ENCODE measurements at regions of chr16 and their contacts with region 1.

Region 1: GRCh38 chr16:20849587-20850390 is 43.5 kb downstream of the REXO5 start:
- DNase-seq: peak; percentile 26 to 66
- ATAC-seq: peak; percentile 65 to 67; a peak in 4 of 6 replicates
- H3K4me3 ChIP-seq: no peak overlapping the region
- H3K27ac ChIP-seq: peak overlapping the region; percentile 35 to 78; a peak in 2 of 6 replicates
- H3K4me1 ChIP-seq: peaks cover 49% of the 10 kb centered on the region
- CTCF ChIP-seq: peak; percentile 95
- EP300 ChIP-seq: no peak
- POLR2A ChIP-seq: no peak
- RAD21 ChIP-seq: peak; percentile 97 to 98

Region 2: DNA sequence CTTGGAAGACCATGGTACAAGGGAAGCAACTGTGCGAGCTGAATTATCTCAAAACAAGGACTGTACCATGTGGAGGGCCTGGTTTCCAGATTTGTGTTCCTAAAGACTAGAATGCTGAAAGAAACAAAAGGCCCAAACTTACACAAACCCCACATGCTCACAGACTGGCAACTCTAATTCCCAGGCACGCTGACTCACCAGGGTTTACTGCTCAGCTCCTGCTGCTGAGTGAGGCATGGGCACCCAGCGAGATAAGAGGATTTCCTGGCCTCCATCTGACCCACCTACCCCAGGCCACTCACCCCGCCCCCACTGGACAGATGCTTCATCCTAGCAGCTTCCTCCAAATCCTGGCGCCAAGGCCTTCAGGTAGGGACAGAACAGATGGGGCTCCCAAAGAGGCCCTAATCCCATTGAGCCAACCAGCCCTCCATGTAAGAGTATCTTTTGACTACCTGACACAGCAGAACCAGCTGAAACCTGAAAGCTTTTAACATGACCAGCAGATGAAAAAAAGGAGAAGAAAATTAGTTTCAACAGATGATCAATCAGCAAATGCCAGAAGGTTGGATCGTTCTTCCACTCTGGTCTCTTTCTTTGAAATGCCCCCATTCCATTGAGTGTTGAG is 16.5 kb after region 1 on chr16:
- CTCF ChIA-PET with region 1: interaction called, 50 read pairs
- POLR2A ChIA-PET with region 1: interaction called, 4 read pairs
- DNase-seq: peak; percentile 76 to 80
- ATAC-seq: peak; percentile 80 to 92
- H3K4me3 ChIP-seq: no peak overlapping the region
- H3K27ac ChIP-seq: peak overlapping the region; percentile 87 to 94
- H3K4me1 ChIP-seq: peaks cover 57% of the 10 kb centered on the region
- CTCF ChIP-seq: no peak
- EP300 ChIP-seq: no peak
- POLR2A ChIP-seq: no peak
- RAD21 ChIP-seq: 0 out of 5 replicates have a peak, but pooled peaks of 1 of the 2 experiments have one; percentile 3

Region 3: GRCh38 chr16:20900299-20901067 is 50.7 kb after region 1 on chr16 and contains the starts of genes DCUN1D3 and LYRM1:
- CTCF ChIA-PET with region 1: interaction called, 60 read pairs
- POLR2A ChIA-PET with region 1: interaction called, 15 read pairs
- DNase-seq: peak; percentile 96 to 99
- ATAC-seq: peak; percentile 92 to 94
- H3K4me3 ChIP-seq: peak within 1 kb of the TSS; percentile 90
- H3K27ac ChIP-seq: peak within 1 kb of the TSS; percentile 92 to 98
- H3K4me1 ChIP-seq: peaks cover 67% of the 10 kb centered on the region
- CTCF ChIP-seq: no peak
- EP300 ChIP-seq: no peak
- POLR2A ChIP-seq: peak; percentile 78
- RAD21 ChIP-seq: no peak
- polyA plus RNA-seq, gene DCUN1D3: 7.2 and 7.5 TPM in 2 replicates
- polyA plus RNA-seq, gene LYRM1: 37.8 and 44.0 TPM in 2 replicates

Region 4: GRCh38 chr16:21001262-21001661 is 151.5 kb after region 1 on chr16:
- CTCF ChIA-PET with region 1: interaction called, 24 read pairs
- POLR2A ChIA-PET with region 1: no interaction called
- DNase-seq: peak; percentile 18 to 47
- ATAC-seq: peak; percentile 47 to 82; a peak in 5 of 6 replicates
- H3K4me3 ChIP-seq: no peak overlapping the region
- H3K27ac ChIP-seq: no peak overlapping the region
- H3K4me1 ChIP-seq: no peaks in the 10 kb centered on the region
- CTCF ChIP-seq: peak; percentile 37
- EP300 ChIP-seq: no peak
- POLR2A ChIP-seq: no peak
- RAD21 ChIP-seq: peak in 1 of 2 experiments; percentile 35; a peak in 2 of 5 replicates

Region 5: GRCh38 chr16:21101631-21102420 is 252.0 kb after region 1 on chr16:
- CTCF ChIA-PET with region 1: interaction called, 66 read pairs
- POLR2A ChIA-PET with region 1: no interaction called
- DNase-seq: peak; percentile 50 to 53
- ATAC-seq: peak; percentile 88 to 94
- H3K4me3 ChIP-seq: no peak overlapping the region
- H3K27ac ChIP-seq: 0 out of 6 replicates have a peak overlapping the region, but pooled peaks of 1 of the 2 experiments have one; percentile 31
- H3K4me1 ChIP-seq: peaks cover 14% of the 10 kb centered on the region
- CTCF ChIP-seq: peak; percentile 48
- EP300 ChIP-seq: no peak
- POLR2A ChIP-seq: no peak
- RAD21 ChIP-seq: peak; percentile 40 to 65; a peak in 4 of 5 replicates

Region 6: DNA sequence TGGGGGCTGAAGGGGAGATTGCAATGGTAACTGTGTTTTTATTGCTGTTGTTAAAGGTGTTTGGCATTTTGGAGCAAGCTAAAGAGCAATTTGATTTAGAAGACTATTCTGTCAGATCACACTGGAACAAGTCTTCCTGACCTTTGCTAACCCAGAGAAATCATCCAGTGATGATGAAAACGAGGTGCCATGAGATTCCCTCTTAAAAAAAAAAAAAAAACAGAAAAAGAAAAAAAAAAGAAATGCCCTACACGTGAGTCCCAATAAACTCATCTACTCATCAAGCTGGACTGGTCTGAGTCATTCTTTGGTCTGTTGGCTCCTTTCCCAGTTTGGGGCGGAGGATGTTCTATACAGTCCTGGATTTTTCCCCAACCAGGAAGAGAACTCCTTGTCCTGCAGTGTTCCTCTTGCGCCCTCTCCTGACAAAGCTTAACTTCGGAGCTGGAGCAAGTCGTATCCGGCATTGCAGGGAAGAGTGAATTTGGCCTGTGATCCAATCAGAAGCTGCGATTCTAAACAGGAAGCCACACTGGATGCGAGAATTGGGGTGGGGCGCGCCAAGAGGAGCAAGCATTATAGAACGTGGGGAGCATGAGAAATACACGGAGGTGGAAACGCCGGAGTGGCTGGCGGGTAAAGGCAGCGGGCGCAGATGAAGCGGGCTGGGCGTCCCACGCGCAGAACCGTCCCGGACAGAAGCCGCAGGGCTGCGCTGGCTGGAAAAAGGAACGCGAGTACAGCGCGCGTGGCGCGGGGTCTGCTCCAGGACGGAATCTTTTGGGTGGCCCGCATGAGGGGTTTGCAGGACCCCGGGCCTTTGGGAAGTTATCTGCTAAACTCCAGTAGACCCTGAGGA is 450.7 kb after region 1 on chr16:
- CTCF ChIA-PET with region 1: interaction called, 16 read pairs
- POLR2A ChIA-PET with region 1: interaction called, 8 read pairs
- DNase-seq: peak; percentile 96 to 99
- ATAC-seq: peak; percentile 86 to 89
- H3K4me3 ChIP-seq: peak overlapping the region; percentile 63
- H3K27ac ChIP-seq: peak overlapping the region; percentile 82 to 93
- H3K4me1 ChIP-seq: peaks cover 30% of the 10 kb centered on the region
- CTCF ChIP-seq: peak; percentile 97
- EP300 ChIP-seq: 0 out of 5 replicates have a peak, but pooled peaks of 1 of the 2 experiments have one; percentile 7
- POLR2A ChIP-seq: peak; percentile 53
- RAD21 ChIP-seq: peak; percentile 98 to 99

Measured in A549 (cell line).